ENCODE measurements at regions of chr5 and their contacts with region 1.

Region 1: GRCh38 chr5:61162010-61162831 is at the start of gene SMIM15:
- DNase-seq: peak; percentile 59 to 85 (median 70)
- ATAC-seq: peak; percentile 93
- H3K4me3 ChIP-seq: peak within 1 kb of the TSS; percentile 87
- H3K4me3 Mint-ChIP-seq: peak within 1 kb of the TSS; percentile 92 to 98 (median 94)
- H3K27ac ChIP-seq: peak within 1 kb of the TSS; percentile 77
- H3K27ac Mint-ChIP-seq: peak within 1 kb of the TSS; percentile 80 to 98 (median 95)
- H3K4me1 ChIP-seq: peaks cover 8 to 16% of the 10 kb centered on the region in 2 donors
- H3K4me1 Mint-ChIP-seq: peaks cover 5 to 57% (median 46%) of the 10 kb centered on the region in 7 donors
- H3K27me3 ChIP-seq: no peaks in the 10 kb centered on the region
- H3K27me3 Mint-ChIP-seq: no peaks in the 10 kb centered on the region
- total RNA-seq, gene SMIM15: 17.3 to 49.0 (median 34.0) TPM

Region 2: GRCh38 chr5:60699530-60700382 is 462.5 kb before region 1 on chr5 and contains the start of gene DEPDC1B:
- CTCF ChIA-PET with region 1: no interaction called
- POLR2A ChIA-PET with region 1: no interaction called
- intact Hi-C with region 1: loop called (anchors 5 to 10 kb)
- DNase-seq: peak; percentile 68 to 92 (median 82)
- ATAC-seq: peak; percentile 93
- H3K4me3 ChIP-seq: peak within 1 kb of the TSS; percentile 97
- H3K4me3 Mint-ChIP-seq: peak within 1 kb of the TSS; percentile 87 to 99 (median 92)
- H3K27ac ChIP-seq: peak within 1 kb of the TSS; percentile 68
- H3K27ac Mint-ChIP-seq: peak within 1 kb of the TSS in 8 of 9 donors; percentile 61 to 91 (median 76)
- H3K4me1 ChIP-seq: peaks cover 0 to 8% of the 10 kb centered on the region in 2 donors
- H3K4me1 Mint-ChIP-seq: peaks cover 6 to 39% (median 19%) of the 10 kb centered on the region in 7 donors
- H3K27me3 ChIP-seq: no peaks in the 10 kb centered on the region
- H3K27me3 Mint-ChIP-seq: peaks cover 0 to 35% (median 0%) of the 10 kb centered on the region in 5 donors
- total RNA-seq, gene DEPDC1B: 0.24 to 24.0 (median 0.31) TPM in 4 of 5 experiments, not detected in the other

Region 3: DNA sequence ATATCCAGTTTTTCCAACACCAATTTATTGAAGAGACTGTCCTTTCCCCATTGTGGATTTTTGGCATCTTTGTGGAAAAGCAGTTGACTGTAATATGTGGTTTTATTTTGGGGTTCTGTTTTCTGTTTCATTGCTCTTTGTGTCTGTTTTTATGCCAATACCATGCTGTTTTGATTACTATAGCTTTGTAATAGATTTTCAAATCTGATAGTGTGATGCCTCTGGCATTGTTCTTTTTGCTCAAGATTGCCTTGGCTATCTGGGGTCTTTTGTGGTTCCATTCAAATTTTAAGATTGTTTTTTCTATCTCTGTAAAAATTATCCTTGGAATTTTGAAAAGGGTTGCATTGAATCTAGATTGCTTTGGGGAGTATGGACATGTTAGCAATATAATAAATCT is 117.7 kb before region 1 on chr5:
- CTCF ChIA-PET with region 1: no interaction called
- POLR2A ChIA-PET with region 1: no interaction called
- intact Hi-C with region 1: no loop called
- DNase-seq: no peak
- ATAC-seq: no peak
- H3K4me3 ChIP-seq: no peak overlapping the region
- H3K4me3 Mint-ChIP-seq: no peak overlapping the region
- H3K27ac ChIP-seq: no peak overlapping the region
- H3K27ac Mint-ChIP-seq: no peak overlapping the region
- H3K4me1 ChIP-seq: no peaks in the 10 kb centered on the region
- H3K4me1 Mint-ChIP-seq: peaks cover 0 to 4% (median 0%) of the 10 kb centered on the region in 7 donors
- H3K27me3 ChIP-seq: no peaks in the 10 kb centered on the region
- H3K27me3 Mint-ChIP-seq: no peaks in the 10 kb centered on the region

Region 4: GRCh38 chr5:61280205-61280604 is 118.0 kb after region 1 on chr5:
- CTCF ChIA-PET with region 1: no interaction called
- POLR2A ChIA-PET with region 1: no interaction called
- intact Hi-C with region 1: loop called (anchors 2 to 5 kb)
- DNase-seq: peak in 4 of 9 donors; percentile 19 to 28 (median 25)
- ATAC-seq: no peak
- H3K4me3 ChIP-seq: no peak overlapping the region
- H3K4me3 Mint-ChIP-seq: no peak overlapping the region
- H3K27ac ChIP-seq: no peak overlapping the region
- H3K27ac Mint-ChIP-seq: peak overlapping the region in 1 of 9 donors; percentile 2
- H3K4me1 ChIP-seq: peaks cover 0 to 5% of the 10 kb centered on the region in 2 donors
- H3K4me1 Mint-ChIP-seq: peaks cover 16 to 37% (median 21%) of the 10 kb centered on the region in 7 donors
- H3K27me3 ChIP-seq: no peaks in the 10 kb centered on the region
- H3K27me3 Mint-ChIP-seq: no peaks in the 10 kb centered on the region

Region 5: GRCh38 chr5:62412537-62413329 is 1250.5 kb after region 1 on chr5 and contains the start of gene IPO11:
- CTCF ChIA-PET with region 1: no interaction called
- POLR2A ChIA-PET with region 1: no interaction called
- intact Hi-C with region 1: loop called (anchors 2 to 5 kb)
- DNase-seq: peak; percentile 97 to 98 (median 98)
- ATAC-seq: peak; percentile 96
- H3K4me3 ChIP-seq: peak within 1 kb of the TSS; percentile 91
- H3K4me3 Mint-ChIP-seq: peak within 1 kb of the TSS; percentile 81 to 97 (median 92)
- H3K27ac ChIP-seq: peak within 1 kb of the TSS; percentile 80
- H3K27ac Mint-ChIP-seq: peak within 1 kb of the TSS; percentile 87 to 96 (median 93)
- H3K4me1 ChIP-seq: peaks cover 11 to 12% of the 10 kb centered on the region in 2 donors
- H3K4me1 Mint-ChIP-seq: peaks cover 8 to 39% (median 29%) of the 10 kb centered on the region in 7 donors
- H3K27me3 ChIP-seq: no peaks in the 10 kb centered on the region
- H3K27me3 Mint-ChIP-seq: peaks cover 0 to 7% (median 0%) of the 10 kb centered on the region in 5 donors
- total RNA-seq, gene IPO11: 22.1 to 29.0 (median 27.7) TPM

Measured in naive thymus-derived CD4-positive, alpha-beta T cell (primary cell).